ENCODE measurements at regions of chr11 and their contacts with region 1.

Region 1: DNA sequence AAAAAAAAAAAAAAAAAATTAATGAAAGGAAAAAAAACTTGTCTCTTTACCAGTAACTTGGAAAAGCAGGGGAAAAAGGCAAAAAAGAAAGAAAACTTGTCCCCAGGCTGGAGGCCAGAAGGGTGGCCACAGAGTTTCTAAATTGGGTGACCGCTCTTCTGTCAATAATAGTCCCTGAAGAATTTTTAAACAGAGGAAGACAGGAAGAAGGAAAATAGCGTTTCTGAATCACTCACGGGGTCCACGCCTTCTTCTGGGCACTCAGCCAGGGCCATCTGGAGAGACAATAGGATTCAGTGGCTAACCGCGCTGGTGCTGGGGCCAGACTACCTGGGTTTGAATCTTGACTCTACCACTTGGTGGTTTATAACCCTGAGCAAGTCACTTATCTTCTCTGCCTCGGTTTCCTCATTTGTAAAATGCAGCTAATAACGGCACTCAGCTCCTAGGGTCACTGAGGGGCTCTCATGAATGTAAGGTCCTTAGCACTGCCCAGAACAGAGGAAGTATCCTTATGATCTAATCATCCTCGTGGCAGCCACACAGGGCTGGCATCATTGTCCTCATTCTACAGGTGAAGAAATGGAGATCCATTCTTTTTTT is 7.0 kb downstream of the C11orf86 start:
- DNase-seq: peak; percentile 94
- ATAC-seq: peak; percentile 47
- H3K4me3 ChIP-seq: no peak overlapping the region
- H3K27ac ChIP-seq: no peak overlapping the region
- H3K4me1 ChIP-seq: no peaks in the 10 kb centered on the region
- H3K27me3 ChIP-seq: no peaks in the 10 kb centered on the region

Region 2: DNA sequence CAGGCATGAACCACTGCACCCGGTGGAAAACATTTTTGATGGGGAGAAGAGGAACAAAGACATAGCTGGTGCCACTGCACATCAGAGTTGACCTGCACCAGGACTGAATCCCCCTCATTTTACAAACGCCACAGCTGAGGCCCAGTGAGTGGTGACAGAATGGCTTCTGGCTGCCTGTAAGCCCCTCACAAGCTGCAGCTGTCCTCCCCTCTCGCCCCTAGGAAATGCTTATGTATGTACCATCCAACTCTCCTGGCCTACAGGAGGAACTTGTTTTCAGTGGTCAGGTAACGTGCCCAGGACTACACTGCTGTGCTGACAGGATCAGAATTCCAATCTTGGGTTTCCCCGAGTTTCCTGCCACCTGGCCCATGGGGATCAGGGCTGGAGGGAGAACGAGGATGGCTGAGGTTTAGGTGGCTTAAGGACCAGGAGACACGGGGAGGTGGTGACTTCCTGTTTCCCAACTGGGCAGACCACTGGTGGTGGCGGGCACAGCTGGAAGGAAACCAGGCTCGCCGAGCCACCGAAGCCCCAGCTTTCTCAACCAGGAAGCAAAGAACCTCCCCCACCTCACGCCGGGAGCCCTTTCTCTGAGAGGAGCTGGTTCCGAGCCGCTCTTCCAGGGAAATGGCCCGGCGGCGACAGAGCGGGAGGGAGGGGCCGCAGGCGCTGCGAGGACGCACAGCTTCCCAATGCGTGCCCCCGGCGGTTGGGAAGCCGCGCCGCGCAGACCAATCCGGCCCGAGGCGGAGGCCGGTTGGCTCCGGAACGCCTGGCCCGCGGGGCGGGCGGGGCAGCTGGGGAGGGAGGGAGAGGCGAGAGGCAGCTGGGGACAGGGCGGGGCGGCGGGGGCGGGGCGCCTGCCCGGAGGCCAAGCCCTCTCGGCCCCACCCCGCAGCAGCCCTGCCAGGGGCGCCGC is 126.2 kb before region 1 on chr11:
- intact Hi-C with region 1: no loop called
- DNase-seq: peak; percentile 97 to 98
- ATAC-seq: peak; percentile 93
- H3K4me3 ChIP-seq: peak overlapping the region; percentile 42 to 61
- H3K27ac ChIP-seq: peak overlapping the region in 1 of 2 donors; percentile 80
- H3K4me1 ChIP-seq: no peaks in the 10 kb centered on the region
- H3K27me3 ChIP-seq: no peaks in the 10 kb centered on the region

Region 3: GRCh38 chr11:67032830-67033555 is 50.9 kb after region 1 on chr11:
- intact Hi-C with region 1: loop called in 1 of 2 experiments (anchors 5 kb)
- DNase-seq: peak; percentile 90 to 91
- ATAC-seq: peak; percentile 85
- H3K4me3 ChIP-seq: no peak overlapping the region
- H3K27ac ChIP-seq: peak overlapping the region in 1 of 2 donors; percentile 9
- H3K4me1 ChIP-seq: no peaks in the 10 kb centered on the region
- H3K27me3 ChIP-seq: no peaks in the 10 kb centered on the region

Measured in aorta (tissue), 5 donors.